Activated CD4-positive, alpha-beta T cell treated with anti-CD3 and anti-CD28 coated beads for 36 hours (primary cell): ENCODE measurements at regions of chr1 and their contacts with region 1.

Region 1: DNA sequence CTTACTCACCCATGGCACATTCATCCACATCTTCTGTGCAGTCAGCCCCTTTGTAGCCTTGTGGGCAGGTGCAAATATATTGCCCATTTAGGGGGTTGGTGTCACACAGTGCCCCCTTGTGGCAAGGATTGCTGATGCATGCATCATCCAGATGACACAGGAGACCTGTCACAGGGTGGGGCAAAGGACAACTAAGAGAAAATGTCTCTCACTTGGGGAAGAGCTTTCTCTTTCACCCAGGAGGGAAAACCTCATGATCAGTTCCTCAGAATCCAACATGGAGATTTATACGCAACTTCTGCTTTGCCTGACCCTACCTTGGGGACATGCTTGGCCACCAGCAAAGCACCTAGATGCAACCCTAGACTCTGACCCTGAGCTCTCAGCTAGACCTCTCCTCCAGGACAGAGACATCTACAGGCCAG is 71.8 kb upstream of the ADAM30 start:
- DNase-seq: peak; percentile 90
- ATAC-seq: peak; percentile 98
- H3K4me3 Mint-ChIP-seq: no peak overlapping the region
- H3K27ac Mint-ChIP-seq: peak overlapping the region; percentile 7
- H3K4me1 Mint-ChIP-seq: peaks cover 3% of the 10 kb centered on the region
- H3K27me3 Mint-ChIP-seq: no peaks in the 10 kb centered on the region

Region 2: DNA sequence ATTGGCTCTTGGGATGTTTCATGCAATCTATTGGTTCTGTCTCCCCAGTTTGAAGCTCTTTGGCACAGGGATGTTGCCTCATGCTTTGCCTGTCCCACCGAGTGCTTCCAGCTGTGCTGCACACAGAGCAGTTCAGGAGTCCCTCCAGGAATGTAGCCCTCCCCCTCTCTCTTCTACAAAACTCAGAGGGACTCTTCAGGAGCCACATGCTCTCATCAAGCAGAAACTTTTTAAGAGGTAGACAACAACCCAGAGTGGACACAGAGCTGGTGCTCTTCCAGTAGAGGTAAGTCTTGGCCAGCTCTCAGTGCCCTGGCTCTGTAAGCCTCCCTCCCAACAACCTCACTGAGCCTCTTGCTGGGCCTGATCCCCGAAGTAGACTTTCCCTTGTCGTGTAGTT is 308.5 kb before region 1 on chr1:
- CTCF ChIA-PET with region 1: no interaction called
- POLR2A ChIA-PET with region 1: no interaction called
- intact Hi-C with region 1: no loop called
- DNase-seq: no peak
- ATAC-seq: no peak
- H3K4me3 Mint-ChIP-seq: no peak overlapping the region
- H3K27ac Mint-ChIP-seq: no peak overlapping the region
- H3K4me1 Mint-ChIP-seq: peaks cover 4% of the 10 kb centered on the region
- H3K27me3 Mint-ChIP-seq: peaks cover 28% of the 10 kb centered on the region

Region 3: DNA sequence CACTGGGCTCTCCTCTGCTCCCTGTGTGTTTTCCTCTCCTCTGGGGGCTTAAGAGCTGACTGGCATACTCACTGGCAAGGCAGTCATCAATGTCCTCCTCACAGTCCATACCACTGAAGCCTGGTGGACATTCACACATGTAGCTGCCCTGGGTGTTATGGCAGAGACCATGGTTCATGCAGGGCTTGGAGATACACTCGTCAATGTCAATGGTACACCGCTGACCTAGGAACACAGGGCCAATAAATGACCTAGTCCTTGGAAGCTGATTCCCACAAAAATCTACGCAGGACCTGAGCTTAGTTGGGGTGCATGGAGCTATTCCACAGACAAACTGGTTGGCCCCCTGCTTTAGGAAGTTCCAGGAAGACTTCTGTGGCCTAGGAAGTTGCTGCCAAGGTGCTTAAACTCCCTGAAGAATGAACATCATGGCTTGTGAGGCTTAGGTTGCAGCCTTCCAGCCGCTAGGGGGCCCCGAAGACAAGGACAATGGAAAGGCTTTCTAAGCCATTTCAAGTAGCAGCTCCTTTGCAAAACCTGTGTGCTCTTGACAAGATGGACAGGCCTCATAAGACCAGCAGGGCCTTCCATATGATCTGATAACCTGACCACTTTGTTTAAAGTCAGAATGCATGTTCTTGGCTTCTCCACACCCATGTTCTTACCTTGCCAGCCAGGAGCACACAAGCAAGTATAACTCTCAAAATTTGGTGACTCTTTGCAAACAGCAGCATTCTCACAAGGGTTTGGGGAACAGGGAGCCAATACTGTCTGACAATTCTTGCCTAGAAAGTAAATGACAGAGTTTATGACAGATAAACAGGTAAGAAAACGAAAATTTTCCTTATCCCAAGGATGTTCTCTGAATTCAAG is 19.5 kb before region 1 on chr1:
- CTCF ChIA-PET with region 1: interaction called, 21 read pairs
- POLR2A ChIA-PET with region 1: no interaction called
- intact Hi-C with region 1: no loop called
- DNase-seq: peak; percentile 86
- ATAC-seq: peak; percentile 70
- H3K4me3 Mint-ChIP-seq: no peak overlapping the region
- H3K27ac Mint-ChIP-seq: no peak overlapping the region
- H3K4me1 Mint-ChIP-seq: peaks cover 4% of the 10 kb centered on the region
- H3K27me3 Mint-ChIP-seq: no peaks in the 10 kb centered on the region

Region 4: GRCh38 chr1:119981986-119982815 is 14.1 kb after region 1 on chr1:
- CTCF ChIA-PET with region 1: interaction called, 14 read pairs
- POLR2A ChIA-PET with region 1: no interaction called
- intact Hi-C with region 1: no loop called
- DNase-seq: no peak
- ATAC-seq: no peak
- H3K4me3 Mint-ChIP-seq: no peak overlapping the region
- H3K27ac Mint-ChIP-seq: no peak overlapping the region
- H3K4me1 Mint-ChIP-seq: peaks cover 12% of the 10 kb centered on the region
- H3K27me3 Mint-ChIP-seq: no peaks in the 10 kb centered on the region